ENCODE measurements at regions of chr7 and their contacts with region 1.

Region 1: GRCh38 chr7:132580717-132581285 is 4.5 kb upstream of the PLXNA4 start:
- DNase-seq: peak; percentile 49 to 82
- H3K4me3 ChIP-seq: no peak overlapping the region
- H3K27ac ChIP-seq: no peak overlapping the region
- H3K4me1 ChIP-seq: peaks cover 0 to 16% (median 12%) of the 10 kb centered on the region in 4 donors
- H3K27me3 ChIP-seq: peaks cover 0 to 10% of the 10 kb centered on the region in 2 donors
- CTCF ChIP-seq: peak; percentile 72 to 77

Region 2: DNA sequence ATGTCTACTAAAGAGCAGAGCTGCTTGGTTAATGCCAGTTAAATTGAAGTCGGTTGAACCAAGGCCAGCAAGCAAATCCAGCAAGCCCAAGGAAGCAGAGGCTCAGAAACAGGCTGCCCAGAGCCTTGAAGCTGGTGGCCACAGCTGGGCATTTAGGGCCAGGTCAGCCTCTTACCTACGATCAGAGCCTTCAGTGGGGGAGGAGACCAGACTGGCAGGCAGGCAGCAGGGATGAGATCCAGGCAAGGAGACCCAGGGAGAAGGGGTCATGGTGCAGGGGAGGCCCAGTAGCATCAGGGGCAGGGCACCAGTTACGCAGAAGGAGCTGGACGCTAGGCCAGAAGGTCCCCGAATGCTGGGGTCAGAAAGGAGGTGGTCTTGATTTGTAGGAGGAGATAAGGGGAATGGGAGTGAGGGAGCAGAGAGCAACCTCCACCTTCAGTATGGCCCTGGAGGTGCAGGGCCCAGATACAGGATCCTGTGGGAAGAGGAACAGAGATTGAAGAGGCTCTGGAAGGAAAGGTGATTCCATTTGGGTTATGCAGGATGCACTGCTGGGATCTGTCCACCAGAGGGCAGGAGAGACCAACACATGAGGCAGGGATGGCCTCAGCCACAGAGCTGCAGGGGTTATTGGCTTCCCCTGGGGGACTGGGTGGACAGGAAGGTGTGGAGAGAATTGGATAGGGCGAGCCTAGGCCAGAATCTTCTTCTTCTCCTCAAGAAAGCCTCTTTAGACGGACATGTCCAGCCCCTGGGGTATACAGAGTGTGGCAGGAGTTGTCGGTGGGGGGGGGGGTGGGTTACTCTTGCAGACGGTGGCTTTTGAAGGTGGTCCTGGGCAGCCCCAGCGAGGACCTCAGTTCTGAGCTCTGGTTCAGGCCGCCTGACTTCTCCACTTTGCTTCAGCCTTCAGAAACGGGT is 891.8 kb before region 1 on chr7:
- intact Hi-C with region 1: loop called (anchors 5 kb)
- DNase-seq: peak; percentile 59 to 73
- H3K4me3 ChIP-seq: no peak overlapping the region
- H3K27ac ChIP-seq: no peak overlapping the region
- H3K4me1 ChIP-seq: peaks cover 0 to 4% (median 2%) of the 10 kb centered on the region in 4 donors
- H3K27me3 ChIP-seq: peaks cover 0 to 65% of the 10 kb centered on the region in 2 donors
- CTCF ChIP-seq: peak; percentile 88 to 91

Region 3: DNA sequence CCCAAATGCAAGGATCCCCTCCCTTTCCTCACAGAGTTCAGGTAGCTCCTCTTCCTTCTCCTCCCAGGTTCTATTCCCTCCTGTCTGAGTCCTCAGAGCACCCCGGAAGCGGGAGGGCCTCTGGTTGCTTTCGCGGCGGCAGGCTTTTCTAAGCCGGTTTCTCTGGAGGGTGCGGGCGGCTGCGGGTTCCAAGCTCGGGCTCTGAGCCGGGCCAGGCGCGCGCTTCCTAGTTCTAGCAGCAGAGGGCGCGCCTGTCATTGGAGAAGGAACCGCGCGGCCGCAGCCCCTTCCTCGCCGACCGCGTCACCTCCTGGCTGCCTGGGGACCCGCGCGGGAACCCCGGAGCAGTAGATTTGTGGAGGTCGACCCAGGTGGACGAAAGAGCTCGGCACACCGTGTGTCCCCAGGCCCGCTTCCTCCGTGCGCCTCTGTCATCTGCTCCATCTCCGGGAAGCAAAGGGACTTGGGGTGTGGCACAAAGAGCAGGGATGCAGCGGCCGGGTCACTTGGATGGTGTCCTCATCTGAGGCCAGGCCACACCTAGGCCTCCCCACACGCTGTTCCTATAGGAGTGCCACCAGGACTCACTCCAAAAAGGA is 635.4 kb before region 1 on chr7:
- intact Hi-C with region 1: loop called (anchors 10 kb)
- DNase-seq: peak in 1 of 2 donors; percentile 52
- H3K4me3 ChIP-seq: peak overlapping the region; percentile 21 to 44
- H3K27ac ChIP-seq: no peak overlapping the region
- H3K4me1 ChIP-seq: peaks cover 0 to 36% (median 25%) of the 10 kb centered on the region in 4 donors
- H3K27me3 ChIP-seq: peaks cover 0 to 33% of the 10 kb centered on the region in 2 donors
- CTCF ChIP-seq: peak; percentile 82 to 96

Region 4: GRCh38 chr7:132318352-132319318 is 262.2 kb before region 1 on chr7:
- intact Hi-C with region 1: loop called (anchors 5 kb)
- DNase-seq: peak; percentile 78 to 88
- H3K4me3 ChIP-seq: no peak overlapping the region
- H3K27ac ChIP-seq: no peak overlapping the region
- H3K4me1 ChIP-seq: peaks cover 0 to 8% (median 4%) of the 10 kb centered on the region in 4 donors
- H3K27me3 ChIP-seq: peaks cover 0 to 9% of the 10 kb centered on the region in 2 donors
- CTCF ChIP-seq: peak; percentile 88

Region 5: DNA sequence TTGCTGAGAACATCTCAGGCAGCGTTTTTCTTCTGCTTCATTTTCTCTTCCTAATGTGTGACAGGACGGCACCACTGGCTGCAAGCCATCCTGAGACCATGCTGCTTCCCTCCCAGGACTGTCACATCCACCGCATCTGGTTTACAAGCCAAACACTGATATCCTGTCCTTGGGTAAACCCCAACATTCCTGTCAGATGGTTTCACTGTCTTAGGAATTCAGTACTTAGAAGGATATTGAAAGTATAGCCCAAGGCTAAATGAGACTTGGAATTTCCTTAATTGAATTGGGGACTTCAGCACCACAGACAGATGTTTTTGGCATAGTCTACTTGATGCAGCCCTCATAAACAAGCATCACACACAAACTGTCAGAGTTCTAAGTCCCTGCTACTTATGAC is 69.7 kb after region 1 on chr7:
- intact Hi-C with region 1: no loop called
- DNase-seq: no peak
- H3K4me3 ChIP-seq: no peak overlapping the region
- H3K27ac ChIP-seq: no peak overlapping the region
- H3K4me1 ChIP-seq: peaks cover 0 to 4% (median 2%) of the 10 kb centered on the region in 4 donors
- H3K27me3 ChIP-seq: no peaks in the 10 kb centered on the region
- CTCF ChIP-seq: no peak

Measured in tibial artery (tissue), 4 donors.